SK-N-SH (cell line): ENCODE measurements at regions of chr11 and their contacts with region 1.

Region 1: DNA sequence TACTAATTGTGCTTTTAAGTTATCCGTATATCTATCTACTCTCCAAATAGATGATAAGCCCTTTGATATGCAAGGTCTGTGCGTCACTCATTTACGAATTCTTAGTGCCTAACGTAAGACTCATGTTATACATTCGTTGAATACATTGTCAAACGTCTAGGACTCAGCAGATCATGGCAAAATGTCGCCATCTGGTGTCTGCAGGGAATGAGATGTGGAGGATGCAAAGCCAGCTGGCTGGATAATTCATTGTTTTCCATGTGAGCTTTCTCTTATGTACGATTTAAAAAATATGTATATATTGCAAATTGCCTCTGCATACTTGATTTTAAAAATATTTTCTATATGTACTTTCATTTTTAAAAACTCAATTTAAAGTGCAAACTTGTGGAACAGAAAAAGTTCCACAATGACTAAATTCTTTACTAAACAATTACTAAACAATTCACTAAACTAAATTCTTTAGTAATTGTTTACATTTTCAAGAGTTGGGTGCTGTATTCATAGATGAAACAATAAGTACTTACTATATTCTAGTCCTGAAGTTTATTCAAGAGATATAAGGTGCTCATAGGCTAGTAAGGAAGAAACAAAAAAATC is 33.8 kb downstream of the ZNF202 start:
- DNase-seq: peak; percentile 70
- H3K4me3 ChIP-seq: no peak overlapping the region
- H3K27ac ChIP-seq: no peak overlapping the region
- H3K4me1 ChIP-seq: peaks cover 0 to 2% of the 10 kb centered on the region in 2 experiments; a peak in 1 of 4 replicates
- H3K27me3 ChIP-seq: peaks cover 5% of the 10 kb centered on the region; the same call in 1 of the 2 replicates
- CTCF ChIP-seq: peak; percentile 91
- EP300 ChIP-seq: no peak
- RAD21 ChIP-seq: peak; percentile 99

Region 2: GRCh38 chr11:123221096-123221561 is 486.6 kb before region 1 on chr11:
- CTCF ChIA-PET with region 1: no interaction called
- POLR2A ChIA-PET with region 1: no interaction called
- DNase-seq: no peak
- H3K4me3 ChIP-seq: no peak overlapping the region
- H3K27ac ChIP-seq: no peak overlapping the region
- H3K4me1 ChIP-seq: peaks cover 0 to 17% of the 10 kb centered on the region in 2 experiments; a peak in 2 of 4 replicates
- H3K27me3 ChIP-seq: no peaks in the 10 kb centered on the region
- CTCF ChIP-seq: no peak
- EP300 ChIP-seq: no peak
- RAD21 ChIP-seq: no peak

Region 3: DNA sequence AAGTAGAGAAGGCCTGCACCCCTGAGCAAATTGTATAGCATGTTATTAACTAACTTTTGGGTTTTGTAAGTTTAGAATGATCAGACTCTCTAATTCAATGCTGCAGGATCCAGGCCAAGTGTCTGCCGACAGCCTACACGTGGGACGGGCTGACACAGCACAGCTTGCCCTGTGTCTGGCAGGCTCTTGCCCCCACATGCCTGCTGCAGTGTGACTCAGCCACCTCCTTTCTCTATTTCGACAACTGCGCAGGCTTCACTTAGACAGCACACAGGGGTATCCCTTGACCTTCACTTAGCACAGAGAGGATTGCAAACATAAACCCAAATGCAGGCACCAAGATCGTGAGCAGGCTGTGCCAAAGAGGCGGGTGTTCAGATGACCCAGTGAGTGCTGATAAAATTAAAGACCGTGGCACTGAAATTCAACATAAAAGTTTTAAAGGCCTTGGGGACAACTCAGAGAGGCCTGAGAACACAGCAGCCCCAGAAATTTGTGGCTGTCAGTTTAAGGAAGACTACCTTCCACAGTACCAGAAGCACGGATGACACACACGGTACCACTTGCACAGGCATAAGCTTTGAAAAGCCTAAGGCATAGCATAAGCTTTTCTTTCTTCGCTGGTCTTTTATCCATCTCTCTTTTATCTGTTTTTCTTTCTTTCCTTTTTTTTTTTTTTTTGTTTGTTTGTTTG is 91.1 kb before region 1 on chr11:
- CTCF ChIA-PET with region 1: interaction called, 13 read pairs
- POLR2A ChIA-PET with region 1: no interaction called
- DNase-seq: peak; percentile 67
- H3K4me3 ChIP-seq: no peak overlapping the region
- H3K27ac ChIP-seq: peak overlapping the region; percentile 27 to 65; a peak in 3 of 4 replicates
- H3K4me1 ChIP-seq: peaks cover 3 to 8% of the 10 kb centered on the region in 2 experiments; a peak in 1 of 4 replicates
- H3K27me3 ChIP-seq: no peaks in the 10 kb centered on the region
- CTCF ChIP-seq: no peak
- EP300 ChIP-seq: peak in 1 of 2 experiments; percentile 43; a peak in 1 of 4 replicates
- RAD21 ChIP-seq: no peak

Region 4: DNA sequence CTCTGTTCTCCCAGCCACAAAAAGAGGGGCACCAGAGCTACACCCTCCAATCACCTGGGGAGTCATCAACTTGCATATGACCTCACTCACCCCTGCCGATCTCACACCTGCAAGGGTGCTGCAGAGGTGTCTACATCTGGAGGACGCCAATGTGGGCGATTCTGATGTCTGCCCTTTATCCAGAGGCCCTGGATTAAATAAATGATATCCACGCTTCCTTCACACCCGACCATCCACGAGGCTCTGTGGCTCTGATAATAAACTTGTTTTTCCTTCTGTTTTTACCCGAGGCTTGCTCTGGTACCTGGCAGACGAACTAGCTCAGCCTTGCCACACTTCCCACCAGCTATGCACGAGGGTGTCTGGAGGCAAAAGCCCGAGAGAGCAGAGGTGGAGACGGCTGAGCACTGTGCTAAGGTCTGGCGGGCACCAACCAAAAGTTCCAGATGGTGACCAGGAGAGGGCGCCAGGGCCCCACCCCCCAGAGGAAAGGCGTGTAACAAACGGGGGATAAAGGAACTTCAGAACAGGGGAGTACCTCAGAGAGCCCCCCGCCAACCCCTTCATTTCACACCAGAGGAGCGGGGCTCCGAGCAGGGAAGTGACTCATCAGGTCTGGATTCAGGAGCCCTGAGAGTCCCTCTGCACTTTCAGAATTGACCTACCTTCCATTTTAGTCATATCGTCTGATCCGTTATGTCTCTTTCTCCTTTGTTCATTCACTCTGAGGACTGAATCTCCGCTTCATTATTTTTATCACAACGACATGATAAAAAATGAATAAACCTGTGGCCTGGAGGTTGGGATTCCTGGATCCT is 66.8 kb before region 1 on chr11:
- CTCF ChIA-PET with region 1: interaction called, 441 read pairs
- POLR2A ChIA-PET with region 1: no interaction called
- DNase-seq: peak; percentile 81
- H3K4me3 ChIP-seq: no peak overlapping the region
- H3K27ac ChIP-seq: no peak overlapping the region
- H3K4me1 ChIP-seq: peaks cover 0 to 8% of the 10 kb centered on the region in 2 experiments; a peak in 1 of 4 replicates
- H3K27me3 ChIP-seq: peaks cover 6% of the 10 kb centered on the region; the same call in 1 of the 2 replicates
- CTCF ChIP-seq: peak; percentile 85
- EP300 ChIP-seq: no peak
- RAD21 ChIP-seq: peak; percentile 92

Region 5: GRCh38 chr11:123672568-123672967 is 35.1 kb before region 1 on chr11:
- CTCF ChIA-PET with region 1: interaction called, 21 read pairs
- POLR2A ChIA-PET with region 1: no interaction called
- DNase-seq: peak; percentile 67
- H3K4me3 ChIP-seq: no peak overlapping the region
- H3K27ac ChIP-seq: peak overlapping the region in 1 of 2 experiments; percentile 12; a peak in 1 of 4 replicates
- H3K4me1 ChIP-seq: no peaks in the 10 kb centered on the region; a peak in 1 of 4 replicates
- H3K27me3 ChIP-seq: no peaks in the 10 kb centered on the region
- CTCF ChIP-seq: no peak
- EP300 ChIP-seq: peak in 1 of 2 experiments; percentile 13; a peak in 1 of 4 replicates
- RAD21 ChIP-seq: peak; percentile 39

Region 6: DNA sequence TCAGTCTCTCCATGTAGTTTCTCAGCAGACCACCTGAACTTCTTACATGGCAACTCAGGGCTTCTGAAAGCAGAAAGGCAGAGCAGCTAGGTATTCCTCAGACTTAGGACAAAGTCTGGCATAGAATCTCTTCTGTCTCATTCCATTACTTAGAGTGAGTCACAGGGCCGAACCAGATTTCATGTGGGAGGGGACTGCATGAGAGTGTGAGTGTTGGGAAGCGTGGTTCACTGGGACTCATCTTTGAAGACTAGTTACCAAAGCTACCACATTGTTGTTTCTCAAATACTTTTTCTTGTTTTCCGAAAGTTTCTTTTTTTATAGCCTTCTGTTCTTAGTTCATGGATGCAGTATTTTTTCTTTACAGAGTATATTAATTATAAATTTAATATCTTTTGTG is 17.2 kb before region 1 on chr11:
- CTCF ChIA-PET with region 1: interaction called, 45 read pairs
- POLR2A ChIA-PET with region 1: no interaction called
- DNase-seq: no peak
- H3K4me3 ChIP-seq: no peak overlapping the region
- H3K27ac ChIP-seq: no peak overlapping the region
- H3K4me1 ChIP-seq: no peaks in the 10 kb centered on the region
- H3K27me3 ChIP-seq: peaks cover 9% of the 10 kb centered on the region; the same call in 1 of the 2 replicates
- CTCF ChIP-seq: no peak
- EP300 ChIP-seq: no peak
- RAD21 ChIP-seq: no peak

Region 7: DNA sequence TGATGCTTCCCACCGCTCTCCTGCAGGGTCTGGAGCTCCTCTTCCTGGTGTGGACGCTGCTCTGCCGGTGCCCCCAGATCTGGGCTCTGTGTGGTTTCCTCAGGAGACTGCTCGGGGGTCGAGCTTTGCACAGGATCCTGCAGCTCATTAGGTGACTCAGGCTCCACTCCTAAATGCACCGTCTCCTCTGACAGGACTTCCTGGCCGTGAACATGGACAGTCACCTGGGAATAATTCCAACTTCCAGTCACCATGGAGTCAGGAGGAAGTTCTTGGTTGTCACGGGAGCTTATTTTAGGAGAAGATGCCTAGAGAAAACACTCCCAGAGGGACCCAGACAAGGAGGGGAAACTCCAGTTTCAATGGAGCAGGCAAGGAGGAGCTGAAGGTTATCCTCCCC is 21.9 kb after region 1 on chr11:
- CTCF ChIA-PET with region 1: interaction called, 19 read pairs
- POLR2A ChIA-PET with region 1: no interaction called
- DNase-seq: no peak
- H3K4me3 ChIP-seq: no peak overlapping the region
- H3K27ac ChIP-seq: no peak overlapping the region
- H3K4me1 ChIP-seq: no peaks in the 10 kb centered on the region
- H3K27me3 ChIP-seq: no peaks in the 10 kb centered on the region
- CTCF ChIP-seq: no peak
- EP300 ChIP-seq: no peak
- RAD21 ChIP-seq: no peak

Region 8: DNA sequence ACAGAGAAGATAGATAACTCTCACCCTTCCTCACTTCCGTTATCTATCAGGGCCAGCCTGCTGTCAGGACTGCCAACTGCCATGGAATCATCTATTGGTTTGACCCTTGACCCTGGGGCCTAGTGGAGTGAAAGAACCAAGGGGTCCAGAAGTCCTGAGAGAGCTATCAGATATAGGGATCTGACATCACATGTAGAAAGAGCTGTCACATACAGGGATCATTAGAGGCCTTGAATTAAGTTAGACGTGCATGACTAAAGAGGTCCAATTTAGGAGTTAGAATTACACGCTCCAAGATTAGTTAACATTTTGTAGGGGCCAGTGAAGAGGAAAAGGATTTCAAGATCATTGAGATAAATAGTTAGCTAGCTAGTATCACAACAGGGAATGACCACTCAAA is 177.9 kb after region 1 on chr11 and contains the start of gene TMEM225:
- CTCF ChIA-PET with region 1: no interaction called
- POLR2A ChIA-PET with region 1: no interaction called
- DNase-seq: no peak
- H3K4me3 ChIP-seq: no peak within 1 kb of the TSS
- H3K27ac ChIP-seq: no peak within 1 kb of the TSS
- H3K4me1 ChIP-seq: no peaks in the 10 kb centered on the region
- H3K27me3 ChIP-seq: no peaks in the 10 kb centered on the region
- CTCF ChIP-seq: no peak
- EP300 ChIP-seq: no peak
- RAD21 ChIP-seq: no peak
- polyA plus RNA-seq, gene TMEM225: not detected in 2 replicates

Region 9: GRCh38 chr11:123905826-123906225 is 198.1 kb after region 1 on chr11:
- CTCF ChIA-PET with region 1: no interaction called
- POLR2A ChIA-PET with region 1: no interaction called
- DNase-seq: no peak
- H3K4me3 ChIP-seq: no peak overlapping the region
- H3K27ac ChIP-seq: no peak overlapping the region
- H3K4me1 ChIP-seq: no peaks in the 10 kb centered on the region
- H3K27me3 ChIP-seq: no peaks in the 10 kb centered on the region
- CTCF ChIP-seq: no peak
- EP300 ChIP-seq: no peak
- RAD21 ChIP-seq: no peak